HepG2 (cell line): ENCODE measurements at regions of chr14 and their contacts with region 1.

Region 1: GRCh38 chr14:21320913-21321312 is 41.0 kb downstream of the RPGRIP1 start:
- DNase-seq: no peak
- ATAC-seq: no peak; the same call in 2 of the 3 replicates
- H3K4me3 ChIP-seq: no peak overlapping the region
- H3K27ac ChIP-seq: no peak overlapping the region
- H3K4me1 ChIP-seq: peaks cover 19% of the 10 kb centered on the region
- H3K27me3 ChIP-seq: peaks cover 4 to 17% of the 10 kb centered on the region in 2 experiments; a peak in 3 of 5 replicates
- CTCF ChIP-seq: no peak
- EP300 ChIP-seq: no peak
- POLR2A ChIP-seq: no peak
- RAD21 ChIP-seq: no peak

Region 2: GRCh38 chr14:21300892-21301291 is 20.0 kb before region 1 on chr14:
- CTCF ChIA-PET with region 1: no interaction called
- POLR2A ChIA-PET with region 1: no interaction called
- in situ Hi-C with region 1: no loop called
- intact Hi-C with region 1: loop called (anchors 2 kb)
- DNase-seq: no peak
- ATAC-seq: peak; percentile 52
- H3K4me3 ChIP-seq: peak overlapping the region; percentile 42 to 68 (median 46)
- H3K27ac ChIP-seq: no peak overlapping the region
- H3K4me1 ChIP-seq: peaks cover 52% of the 10 kb centered on the region
- H3K27me3 ChIP-seq: no peaks in the 10 kb centered on the region
- CTCF ChIP-seq: peak; percentile 64
- EP300 ChIP-seq: no peak
- POLR2A ChIP-seq: no peak
- RAD21 ChIP-seq: 0 out of 2 replicates have a peak, but pooled peaks have one; percentile 41